ENCODE measurements at regions of chr4 and their contacts with region 1.

Region 1: GRCh38 chr4:39134683-39135319 is 47.5 kb upstream of the WDR19 start:
- DNase-seq: no peak
- ATAC-seq: no peak
- H3K4me3 Mint-ChIP-seq: no peak overlapping the region
- H3K27ac Mint-ChIP-seq: no peak overlapping the region
- H3K4me1 Mint-ChIP-seq: peaks cover 9% of the 10 kb centered on the region
- H3K27me3 Mint-ChIP-seq: no peaks in the 10 kb centered on the region
- CTCF ChIP-seq: no peak

Region 2: GRCh38 chr4:38889143-38889542 is 245.7 kb before region 1 on chr4:
- CTCF ChIA-PET with region 1: interaction called, 31 read pairs
- POLR2A ChIA-PET with region 1: no interaction called
- intact Hi-C with region 1: no loop called
- DNase-seq: no peak
- ATAC-seq: peak; percentile 70
- H3K4me3 Mint-ChIP-seq: peak overlapping the region; percentile 40
- H3K27ac Mint-ChIP-seq: peak overlapping the region; percentile 91
- H3K4me1 Mint-ChIP-seq: peaks cover 25% of the 10 kb centered on the region
- H3K27me3 Mint-ChIP-seq: no peaks in the 10 kb centered on the region
- CTCF ChIP-seq: no peak

Region 3: GRCh38 chr4:38894340-38894982 is 240.3 kb before region 1 on chr4:
- CTCF ChIA-PET with region 1: interaction called, 31 read pairs
- POLR2A ChIA-PET with region 1: no interaction called
- intact Hi-C with region 1: no loop called
- DNase-seq: peak; percentile 27
- ATAC-seq: peak; percentile 48
- H3K4me3 Mint-ChIP-seq: no peak overlapping the region
- H3K27ac Mint-ChIP-seq: no peak overlapping the region
- H3K4me1 Mint-ChIP-seq: peaks cover 29% of the 10 kb centered on the region
- H3K27me3 Mint-ChIP-seq: peaks cover 5% of the 10 kb centered on the region
- CTCF ChIP-seq: no peak

Region 4: DNA sequence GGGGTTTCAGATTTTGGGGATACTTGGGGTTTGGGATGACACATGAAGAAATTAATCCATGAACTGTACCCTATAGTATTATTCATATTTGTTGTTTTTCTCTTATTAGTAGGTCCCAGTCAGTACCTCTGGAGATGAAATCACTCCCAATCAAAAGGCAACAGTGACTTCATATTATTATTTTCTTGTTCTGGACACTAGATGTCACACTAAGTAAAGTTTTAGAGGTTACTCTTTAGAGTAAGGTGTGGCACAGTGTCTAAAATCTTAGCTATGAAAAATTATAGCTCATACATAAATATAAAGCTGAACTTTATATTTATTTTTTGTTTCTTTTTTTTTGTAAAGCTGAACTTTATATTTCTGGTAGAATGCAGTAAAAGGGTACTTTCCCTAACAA is 232.1 kb before region 1 on chr4:
- CTCF ChIA-PET with region 1: interaction called, 161 read pairs
- POLR2A ChIA-PET with region 1: no interaction called
- intact Hi-C with region 1: loop called (anchors 1 kb)
- DNase-seq: no peak
- ATAC-seq: peak; percentile 84
- H3K4me3 Mint-ChIP-seq: no peak overlapping the region
- H3K27ac Mint-ChIP-seq: no peak overlapping the region
- H3K4me1 Mint-ChIP-seq: peaks cover 5% of the 10 kb centered on the region
- H3K27me3 Mint-ChIP-seq: peaks cover 7% of the 10 kb centered on the region
- CTCF ChIP-seq: peak; percentile 61

Region 5: DNA sequence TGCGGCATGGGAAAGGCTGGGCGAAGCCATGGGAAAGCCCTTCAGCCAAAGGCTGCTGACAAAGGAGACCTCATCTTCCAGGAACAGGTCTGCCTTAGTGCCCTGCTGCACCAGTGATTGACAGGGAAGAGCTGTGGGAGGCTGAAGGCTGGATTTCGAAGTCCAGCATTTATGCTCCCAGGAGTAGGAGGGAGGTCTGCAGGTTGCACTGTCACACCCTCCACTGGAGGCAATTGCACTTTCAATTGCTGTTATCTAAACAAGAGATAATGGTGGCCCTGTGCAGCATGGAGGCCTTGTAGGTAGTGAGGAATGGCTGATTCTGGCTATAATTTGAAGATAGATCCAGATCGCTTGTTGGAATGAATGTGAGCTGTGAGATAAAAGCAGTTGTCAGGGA is 223.5 kb before region 1 on chr4:
- CTCF ChIA-PET with region 1: interaction called, 161 read pairs
- POLR2A ChIA-PET with region 1: no interaction called
- intact Hi-C with region 1: no loop called
- DNase-seq: no peak
- ATAC-seq: no peak
- H3K4me3 Mint-ChIP-seq: no peak overlapping the region
- H3K27ac Mint-ChIP-seq: no peak overlapping the region
- H3K4me1 Mint-ChIP-seq: peaks cover 8% of the 10 kb centered on the region
- H3K27me3 Mint-ChIP-seq: no peaks in the 10 kb centered on the region
- CTCF ChIP-seq: no peak

Region 6: DNA sequence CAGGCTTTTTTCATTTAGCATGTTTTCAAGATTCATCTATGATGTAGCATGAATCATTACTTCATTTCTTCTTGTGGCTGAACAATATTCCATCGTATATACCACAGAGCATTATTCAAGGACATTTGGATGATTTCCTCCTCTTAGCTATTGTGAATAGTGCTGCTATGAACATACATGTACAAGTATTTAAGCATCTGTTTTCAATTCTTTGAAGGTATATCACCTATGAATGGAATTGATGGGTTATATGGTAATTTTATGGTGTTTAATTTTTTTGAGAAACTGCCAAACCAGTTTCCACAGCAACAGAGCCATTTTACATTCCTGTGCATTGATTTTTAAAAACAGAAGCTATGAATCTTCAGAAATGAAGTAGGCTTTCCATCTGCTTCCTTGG is 11.4 kb after region 1 on chr4:
- CTCF ChIA-PET with region 1: interaction called, 30 read pairs
- POLR2A ChIA-PET with region 1: no interaction called
- intact Hi-C with region 1: no loop called
- DNase-seq: no peak
- ATAC-seq: no peak
- H3K4me3 Mint-ChIP-seq: no peak overlapping the region
- H3K27ac Mint-ChIP-seq: no peak overlapping the region
- H3K4me1 Mint-ChIP-seq: peaks cover 4% of the 10 kb centered on the region
- H3K27me3 Mint-ChIP-seq: no peaks in the 10 kb centered on the region
- CTCF ChIP-seq: no peak